Posterior vena cava (tissue), 2 donors: ENCODE measurements at regions of chr17 and their contacts with region 1.

Region 1: DNA sequence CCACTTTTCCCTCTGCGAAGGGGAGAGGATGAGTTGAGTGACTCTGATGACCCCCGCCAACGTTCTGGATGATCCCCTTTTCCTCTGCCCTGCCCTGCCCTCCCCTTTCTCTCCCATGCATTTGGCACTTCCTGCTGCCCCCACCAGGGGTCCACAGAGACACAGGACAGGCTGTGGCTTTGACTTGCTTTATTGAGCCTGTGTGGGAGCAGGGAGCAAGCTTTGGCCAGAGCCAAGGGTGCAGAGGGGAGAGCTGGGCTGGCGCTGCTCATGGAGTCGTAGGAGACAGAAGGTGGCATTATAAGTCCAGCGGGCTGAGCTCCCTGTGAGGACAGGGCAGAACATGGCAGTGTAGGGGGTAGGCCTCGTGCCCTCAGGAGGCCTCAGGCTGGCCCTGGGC is 1.6 kb downstream of the PPY start:
- DNase-seq: no peak

Region 2: GRCh38 chr17:42248351-42249179 is 1692.1 kb before region 1 on chr17:
- intact Hi-C with region 1: no loop called
- DNase-seq: peak; percentile 89

Region 3: GRCh38 chr17:43920500-43921095 is 20.0 kb before region 1 on chr17:
- intact Hi-C with region 1: loop called in 1 of 2 experiments (anchors 1 kb)
- DNase-seq: no peak

Region 4: DNA sequence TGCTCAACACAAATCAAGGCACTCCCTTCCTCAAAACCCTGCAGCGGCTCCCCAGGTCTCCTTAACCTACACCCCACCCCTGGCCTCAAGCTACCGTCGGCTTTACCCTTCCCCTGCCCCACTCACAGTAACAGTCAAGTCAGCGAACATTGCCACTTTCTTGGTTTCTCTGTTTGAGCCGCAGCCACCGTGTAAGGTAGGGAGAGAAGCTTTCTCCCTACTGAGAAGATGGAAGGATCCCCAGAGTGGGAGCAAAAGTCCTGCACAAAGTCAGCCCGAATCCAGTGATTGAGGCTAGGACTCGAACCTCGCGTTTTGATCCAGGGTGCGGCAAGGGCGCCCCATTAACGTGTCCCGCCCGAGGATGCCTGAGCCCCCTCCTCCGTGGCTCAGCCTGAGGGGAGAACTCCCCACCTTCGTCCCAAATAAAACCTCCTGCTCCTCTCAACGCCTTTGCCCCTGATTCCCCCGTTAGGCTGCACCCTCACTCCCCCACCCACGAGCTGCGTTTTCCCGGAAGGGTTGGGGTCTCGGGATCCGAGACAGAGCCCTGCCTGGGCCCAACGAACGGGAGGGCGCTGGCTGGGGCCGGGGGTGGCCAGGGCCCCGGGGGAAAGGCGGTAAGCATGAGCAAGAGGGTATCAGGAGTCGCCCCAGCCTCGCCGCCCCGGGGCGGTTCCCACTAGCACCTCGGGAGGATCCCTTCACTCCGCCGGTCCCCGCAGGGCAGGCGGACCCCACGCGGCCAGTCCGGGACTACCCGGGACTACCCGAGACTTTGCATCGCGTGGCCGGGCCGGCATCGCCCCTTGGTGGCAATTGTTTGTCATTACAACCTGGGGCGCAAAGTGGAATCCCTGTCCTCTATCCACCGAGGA is 53.9 kb after region 1 on chr17:
- intact Hi-C with region 1: loop called in 1 of 2 experiments (anchors 5 kb)
- DNase-seq: peak; percentile 91

Region 5: DNA sequence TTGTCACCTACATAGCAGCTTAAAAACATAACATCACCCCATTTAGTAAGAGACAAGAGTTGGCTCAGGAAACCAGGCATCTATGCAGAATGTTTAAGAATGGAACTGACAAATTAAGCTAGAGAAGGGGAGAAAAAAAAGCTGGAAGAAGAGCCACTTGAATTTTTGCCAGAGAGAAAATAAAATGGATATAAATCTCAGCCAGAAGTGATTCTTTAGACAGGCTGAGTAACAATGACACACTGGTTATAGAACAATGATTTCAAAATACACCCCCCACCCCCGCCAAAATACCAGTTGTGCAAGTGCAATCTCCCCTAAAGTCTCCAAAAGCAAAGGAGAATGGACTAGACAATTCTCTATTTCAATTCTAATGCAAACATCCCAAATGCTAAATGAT is 103.4 kb after region 1 on chr17:
- intact Hi-C with region 1: loop called in 1 of 2 experiments (anchors 10 kb)
- DNase-seq: peak; percentile 0

Region 6: GRCh38 chr17:44159519-44160210 is 219.0 kb after region 1 on chr17:
- intact Hi-C with region 1: loop called in 1 of 2 experiments (anchors 10 kb)
- DNase-seq: no peak